Uterus (tissue), 4 donors: ENCODE measurements at regions of chr1 and their contacts with region 1.

Region 1: DNA sequence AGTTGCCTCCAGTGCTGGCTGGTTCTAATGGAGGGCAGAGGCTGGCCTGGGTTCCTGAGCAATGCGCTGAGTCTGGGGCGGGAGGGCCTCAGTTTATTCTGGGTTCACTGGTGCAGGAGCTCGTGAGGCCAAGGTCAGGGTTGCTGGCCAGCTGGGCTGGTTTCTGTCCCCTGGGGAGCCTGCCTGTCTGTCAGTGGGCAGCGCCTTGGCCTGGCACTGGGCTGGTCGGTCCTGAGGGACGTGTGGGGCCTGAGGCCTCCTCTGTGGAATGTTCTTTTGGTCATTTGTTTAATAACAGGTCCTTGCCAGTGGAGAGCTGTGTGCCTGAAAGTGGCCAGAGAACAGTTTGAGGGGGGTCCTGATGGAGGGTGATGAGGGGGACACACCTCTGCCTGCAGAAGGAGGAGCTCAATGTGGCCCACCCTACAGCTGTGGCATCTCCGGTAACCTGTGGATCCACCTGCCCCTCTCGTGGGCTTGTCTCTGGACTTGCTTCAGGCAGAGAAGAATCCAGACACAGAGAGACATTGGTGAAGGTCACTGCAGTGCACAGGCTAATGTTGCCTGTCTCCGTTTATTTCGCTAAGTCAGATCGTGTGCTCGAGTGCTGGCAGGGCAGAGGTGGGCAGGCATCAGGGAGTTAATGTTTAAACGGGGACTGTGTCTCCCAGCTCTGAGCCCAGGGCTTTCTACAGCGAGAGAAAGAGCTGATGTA is 34.6 kb downstream of the COQ8A start:
- DNase-seq: peak in 1 of 2 donors; percentile 53
- H3K4me3 ChIP-seq: no peak overlapping the region
- H3K27ac ChIP-seq: peak overlapping the region; percentile 89 to 94
- H3K4me1 ChIP-seq: peaks cover 10 to 19% of the 10 kb centered on the region in 2 donors
- H3K27me3 ChIP-seq: no peaks in the 10 kb centered on the region
- CTCF ChIP-seq: no peak
- POLR2A ChIP-seq: no peak

Region 2: DNA sequence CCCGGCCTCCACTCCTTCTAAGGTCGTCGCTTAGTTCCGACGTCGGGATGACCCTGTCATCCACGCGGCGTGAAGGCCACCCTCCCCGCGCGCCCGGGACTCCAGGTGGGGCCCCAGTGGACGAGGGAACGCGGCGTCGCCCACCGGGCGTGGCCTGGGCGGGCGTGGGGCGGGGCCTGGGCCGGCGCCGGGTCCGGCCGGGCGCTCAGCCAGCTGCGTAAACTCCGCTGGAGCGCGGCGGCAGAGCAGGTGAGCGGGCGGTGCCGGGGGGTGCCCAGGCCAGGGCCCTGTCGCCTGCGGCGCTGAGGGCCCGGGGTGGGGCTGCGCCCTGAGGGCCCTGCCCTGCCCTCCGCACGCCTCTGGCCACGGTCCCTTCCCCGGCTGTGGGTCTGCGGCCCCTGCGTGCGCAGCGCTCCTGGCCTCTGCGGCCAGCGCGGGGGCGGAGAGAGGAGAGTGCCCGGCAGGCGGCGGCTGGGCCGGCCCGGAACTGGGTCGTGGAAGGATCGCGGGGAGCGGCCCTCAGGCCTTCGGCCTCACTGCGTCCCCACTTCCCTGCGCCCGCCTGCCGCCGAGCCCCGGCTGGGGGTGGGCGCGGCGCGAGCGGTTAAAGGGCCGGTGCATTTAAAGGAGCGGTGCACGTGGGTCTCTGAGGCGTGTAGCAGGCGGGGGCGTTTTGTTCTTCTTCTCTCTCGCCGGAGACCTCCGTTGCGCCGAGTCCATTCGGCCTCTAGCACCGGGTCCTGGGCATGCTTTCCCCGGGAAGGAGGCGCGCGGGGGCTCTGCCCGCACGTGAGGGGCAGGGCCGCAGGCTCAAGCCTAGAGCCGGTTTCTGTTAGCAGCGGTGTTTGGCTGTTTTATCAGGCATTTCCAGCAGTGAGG is 104.1 kb before region 1 on chr1 and contains the start of gene PSEN2:
- intact Hi-C with region 1: loop called (anchors 5 kb)
- DNase-seq: peak; percentile 48 to 76
- H3K4me3 ChIP-seq: peak within 1 kb of the TSS; percentile 59 to 70
- H3K27ac ChIP-seq: peak within 1 kb of the TSS; percentile 69 to 80
- H3K4me1 ChIP-seq: peaks cover 0 to 10% of the 10 kb centered on the region in 2 donors
- H3K27me3 ChIP-seq: no peaks in the 10 kb centered on the region
- CTCF ChIP-seq: peak in 3 of 4 experiments; percentile 31 to 56 (median 51)
- POLR2A ChIP-seq: peak in 1 of 2 donors; percentile 61
- total RNA-seq, gene PSEN2: 12.8 to 80.9 (median 31.3) TPM

Region 3: DNA sequence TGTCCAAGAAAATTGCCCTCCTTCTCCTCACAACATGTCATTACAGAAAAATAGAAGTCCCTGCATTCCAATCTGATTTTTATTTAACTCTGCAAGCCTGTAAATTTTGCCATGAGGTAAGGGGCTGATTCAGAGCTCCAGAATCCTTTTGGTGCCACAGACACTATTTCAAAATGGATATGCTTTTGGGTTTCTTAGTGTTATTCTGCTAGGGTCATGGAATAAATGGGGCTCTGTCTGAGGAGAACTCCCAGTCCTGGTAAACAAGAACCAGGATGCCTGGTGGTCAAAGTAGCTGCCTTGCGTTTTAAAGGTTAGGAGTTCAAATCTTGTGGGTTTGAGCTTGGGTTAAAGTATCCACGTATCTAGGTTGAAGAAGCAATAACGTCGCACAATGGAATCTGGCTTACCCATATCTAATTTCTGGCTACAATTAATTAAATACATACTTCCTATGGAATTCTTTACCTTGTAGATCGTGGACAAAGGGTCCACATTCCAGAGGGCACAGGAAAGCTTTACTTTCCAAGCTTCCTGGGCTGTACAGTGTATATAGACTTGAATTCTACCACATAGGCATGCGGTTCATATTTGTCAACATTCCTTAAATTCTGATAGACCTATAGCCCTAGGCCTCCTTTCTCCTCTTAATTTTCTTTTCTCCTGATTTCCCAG is 441.6 kb after region 1 on chr1:
- intact Hi-C with region 1: no loop called
- DNase-seq: no peak
- H3K4me3 ChIP-seq: no peak overlapping the region
- H3K27ac ChIP-seq: no peak overlapping the region
- H3K4me1 ChIP-seq: no peaks in the 10 kb centered on the region
- H3K27me3 ChIP-seq: no peaks in the 10 kb centered on the region
- CTCF ChIP-seq: no peak
- POLR2A ChIP-seq: no peak